ENCODE measurements at regions of chr13 and their contacts with region 1.

Region 1: GRCh38 chr13:46146899-46147298 is 35.1 kb downstream of the LCP1 start:
- DNase-seq: peak; percentile 67
- H3K4me3 ChIP-seq: no peak overlapping the region
- H3K27ac ChIP-seq: no peak overlapping the region
- H3K4me1 ChIP-seq: peaks cover 53% of the 10 kb centered on the region
- H3K27me3 ChIP-seq: no peaks in the 10 kb centered on the region
- CTCF ChIP-seq: peak; percentile 70

Region 2: GRCh38 chr13:44318161-44318560 is 1828.7 kb before region 1 on chr13:
- CTCF ChIA-PET with region 1: no interaction called
- POLR2A ChIA-PET with region 1: no interaction called
- intact Hi-C with region 1: no loop called
- DNase-seq: no peak
- H3K4me3 ChIP-seq: no peak overlapping the region
- H3K27ac ChIP-seq: no peak overlapping the region
- H3K4me1 ChIP-seq: no peaks in the 10 kb centered on the region
- H3K27me3 ChIP-seq: no peaks in the 10 kb centered on the region
- CTCF ChIP-seq: no peak

Region 3: GRCh38 chr13:46288570-46289259 is 141.8 kb after region 1 on chr13:
- CTCF ChIA-PET with region 1: no interaction called
- POLR2A ChIA-PET with region 1: no interaction called
- intact Hi-C with region 1: loop called (anchors 5 kb)
- DNase-seq: peak; percentile 84
- H3K4me3 ChIP-seq: no peak overlapping the region
- H3K27ac ChIP-seq: peak overlapping the region; percentile 27
- H3K4me1 ChIP-seq: peaks cover 37% of the 10 kb centered on the region
- H3K27me3 ChIP-seq: no peaks in the 10 kb centered on the region
- CTCF ChIP-seq: peak; percentile 89

Region 4: DNA sequence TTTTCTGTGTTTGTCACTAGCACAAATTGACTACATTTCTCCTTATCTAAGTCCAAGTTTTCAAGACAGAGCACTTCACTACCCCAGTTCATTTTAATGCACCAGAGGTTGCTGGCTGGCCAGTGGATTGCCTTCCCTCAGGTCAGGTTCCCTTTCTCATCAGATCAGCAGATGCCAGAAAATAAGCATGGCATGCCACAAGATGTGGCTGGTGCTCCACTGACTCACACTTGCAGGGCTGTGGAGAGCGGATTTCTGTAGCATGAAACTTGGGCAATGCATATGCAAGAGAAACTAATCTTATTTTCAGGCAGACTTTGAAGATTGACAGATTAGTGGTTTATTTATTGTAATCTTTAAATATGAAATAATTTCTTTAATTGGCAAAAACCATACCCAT is 160.7 kb after region 1 on chr13:
- CTCF ChIA-PET with region 1: no interaction called
- POLR2A ChIA-PET with region 1: no interaction called
- intact Hi-C with region 1: loop called (anchors 5 kb)
- DNase-seq: peak; percentile 44
- H3K4me3 ChIP-seq: no peak overlapping the region
- H3K27ac ChIP-seq: peak overlapping the region; percentile 38
- H3K4me1 ChIP-seq: peaks cover 7% of the 10 kb centered on the region
- H3K27me3 ChIP-seq: no peaks in the 10 kb centered on the region
- CTCF ChIP-seq: no peak